GM18951 (cell line): ENCODE measurements at regions of chr19 and their contacts with region 1.

Region 1: DNA sequence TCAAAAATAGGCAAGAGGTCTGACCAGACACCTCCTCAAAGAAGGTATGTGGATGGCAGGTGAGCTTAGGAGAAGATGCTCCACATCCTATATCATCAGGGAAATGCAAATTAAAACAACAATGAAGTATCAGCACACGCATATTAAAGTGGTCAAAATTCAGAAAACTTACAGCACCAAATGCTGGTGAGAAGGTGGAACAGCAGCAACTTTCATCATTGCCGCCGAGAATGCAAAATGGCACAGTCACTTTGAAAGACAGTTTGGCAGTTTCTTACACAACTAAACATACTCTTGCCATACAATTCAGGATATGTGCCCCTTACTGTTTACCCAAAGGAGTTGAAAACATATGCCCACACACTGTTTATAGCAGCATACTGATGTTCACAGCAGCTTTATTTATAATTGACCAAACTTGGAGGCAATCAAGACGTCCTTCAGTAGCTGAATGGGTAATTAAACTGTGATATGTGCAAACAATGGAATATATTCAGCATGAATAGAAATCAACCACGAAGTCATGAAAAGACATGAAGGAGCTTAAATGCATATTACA is 22.5 kb downstream of the OR10H4 start:
- POLR2A ChIP-seq: no peak

Region 2: DNA sequence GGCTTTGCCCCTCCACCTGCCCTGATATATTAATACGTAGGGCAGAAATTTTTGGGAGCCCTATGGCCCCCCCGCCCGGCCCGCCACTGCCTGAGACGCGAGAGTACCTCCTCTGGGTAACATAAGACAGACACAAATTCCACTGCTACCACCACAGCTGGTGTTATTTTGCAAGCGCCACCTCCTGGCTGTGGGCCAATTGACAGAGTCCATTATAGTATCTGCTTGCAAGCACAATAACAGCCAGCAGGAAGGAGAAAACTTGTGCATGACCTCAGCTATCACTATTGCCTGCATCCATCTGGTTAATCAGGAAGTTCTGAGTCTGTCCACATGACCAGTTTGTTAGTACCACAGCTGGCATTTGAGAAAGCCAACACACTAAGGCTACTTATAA is 268.8 kb before region 1 on chr19:
- in situ Hi-C with region 1: no loop called
- POLR2A ChIP-seq: no peak

Region 3: DNA sequence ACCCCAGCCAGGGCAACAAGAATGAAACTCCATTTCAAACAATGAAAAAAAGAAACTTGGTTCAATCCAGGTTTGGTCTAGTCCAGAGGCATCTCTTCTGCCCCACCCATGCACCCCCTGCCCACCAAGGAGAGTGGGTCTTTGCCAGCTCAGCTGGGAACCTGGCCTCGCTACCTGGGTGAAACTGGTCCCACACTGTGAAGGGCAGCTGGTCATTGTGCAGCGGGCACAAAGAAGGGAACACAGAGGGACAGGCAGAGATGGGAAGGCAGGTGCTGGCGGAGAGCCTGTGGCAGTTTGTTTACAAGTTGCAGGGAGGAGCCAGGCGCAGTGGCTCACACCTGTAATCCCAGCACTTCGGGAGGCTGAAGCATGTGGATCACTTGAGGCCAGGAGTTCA is 1005.1 kb after region 1 on chr19:
- in situ Hi-C with region 1: loop called (anchors 25 kb)
- POLR2A ChIP-seq: no peak